ENCODE measurements at regions of chr7 and their contacts with region 1.

Region 1: GRCh38 chr7:158473221-158473620 is 114.4 kb downstream of the PTPRN2 start:
- DNase-seq: no peak

Region 2: DNA sequence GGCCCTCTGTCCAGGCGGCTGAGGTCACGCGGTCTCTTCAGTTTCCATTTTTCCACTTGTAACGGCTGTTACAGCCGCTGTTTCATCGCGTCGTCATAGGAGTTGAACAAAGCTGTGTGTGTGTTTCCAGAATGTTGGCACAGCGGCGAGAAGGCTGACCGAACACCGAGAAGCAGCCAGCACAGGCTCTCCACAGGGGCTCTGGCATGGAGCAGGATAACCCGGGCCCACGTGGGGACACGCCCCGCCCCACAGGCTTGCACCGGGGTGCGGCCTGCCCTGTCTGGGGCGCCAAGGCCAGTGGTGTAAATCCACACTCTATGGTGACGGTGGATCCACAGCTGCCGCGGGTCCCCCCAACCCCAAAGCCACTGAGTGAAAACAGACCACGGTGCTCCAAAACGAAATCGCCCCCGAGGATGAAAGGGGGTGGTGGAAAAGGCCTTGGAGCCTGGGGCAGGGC is 688.2 kb before region 1 on chr7:
- in situ Hi-C with region 1: loop called (anchors 25 kb)
- DNase-seq: peak; percentile 51

Measured in G401 (cell line).